ENCODE measurements at regions of chr2 and their contacts with region 1.

Region 1: GRCh38 chr2:176454893-176455811 is 185.9 kb downstream of the MTX2 start:
- DNase-seq: peak; percentile 60
- H3K4me3 Mint-ChIP-seq: no peak overlapping the region
- H3K27ac Mint-ChIP-seq: no peak overlapping the region
- H3K4me1 Mint-ChIP-seq: peaks cover 2% of the 10 kb centered on the region
- H3K27me3 Mint-ChIP-seq: peaks cover 41% of the 10 kb centered on the region

Region 2: DNA sequence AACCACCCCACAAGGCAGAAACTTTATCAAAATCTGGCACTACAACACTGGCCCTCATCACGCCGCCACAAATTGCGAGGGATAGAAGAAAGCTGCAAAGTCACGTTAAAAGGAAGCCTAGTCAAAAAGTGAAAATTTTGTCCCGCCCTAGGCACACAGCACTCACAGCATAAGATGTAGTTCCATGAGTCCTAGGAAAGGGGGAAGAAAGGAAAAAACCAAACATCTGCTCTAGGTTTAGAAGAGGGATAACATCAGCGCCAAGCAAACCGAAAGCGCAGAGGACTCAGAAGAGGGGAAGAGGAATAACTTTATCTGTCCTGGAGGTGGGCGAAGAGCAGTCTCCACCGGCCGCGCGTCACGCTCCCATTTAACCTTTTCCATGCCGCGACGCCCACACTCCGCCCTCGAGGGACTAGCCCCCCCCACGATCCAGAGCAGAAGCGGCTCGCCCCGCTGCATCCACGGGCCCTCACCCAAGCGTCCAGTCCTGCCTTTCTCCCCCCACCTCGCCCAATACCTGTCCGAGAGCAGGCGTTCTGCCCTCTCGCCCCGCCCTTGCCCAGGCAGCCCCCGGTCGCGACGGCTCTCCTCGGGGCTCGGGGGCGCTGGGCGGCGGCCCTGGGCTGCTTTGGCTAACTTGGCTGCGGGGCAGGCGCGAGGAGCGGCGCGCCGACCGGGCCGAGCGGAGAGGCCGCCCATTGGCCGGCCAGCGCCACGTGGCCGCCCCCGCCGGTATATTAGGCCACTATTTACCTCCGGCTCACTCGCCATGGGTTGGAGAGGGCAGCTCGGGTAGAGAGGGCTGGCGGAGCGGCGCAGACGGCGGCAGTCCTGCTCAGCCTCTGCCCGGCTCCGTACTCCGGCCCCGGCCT is 267.0 kb before region 1 on chr2 and contains the start of gene HOXD1:
- intact Hi-C with region 1: loop called (anchors 5 kb)
- DNase-seq: no peak
- H3K4me3 Mint-ChIP-seq: peak within 1 kb of the TSS; percentile 76
- H3K27ac Mint-ChIP-seq: no peak within 1 kb of the TSS
- H3K4me1 Mint-ChIP-seq: peaks cover 10% of the 10 kb centered on the region
- H3K27me3 Mint-ChIP-seq: peaks cover 74% of the 10 kb centered on the region
- total RNA-seq, gene HOXD1: not detected in 2 replicates

Region 3: DNA sequence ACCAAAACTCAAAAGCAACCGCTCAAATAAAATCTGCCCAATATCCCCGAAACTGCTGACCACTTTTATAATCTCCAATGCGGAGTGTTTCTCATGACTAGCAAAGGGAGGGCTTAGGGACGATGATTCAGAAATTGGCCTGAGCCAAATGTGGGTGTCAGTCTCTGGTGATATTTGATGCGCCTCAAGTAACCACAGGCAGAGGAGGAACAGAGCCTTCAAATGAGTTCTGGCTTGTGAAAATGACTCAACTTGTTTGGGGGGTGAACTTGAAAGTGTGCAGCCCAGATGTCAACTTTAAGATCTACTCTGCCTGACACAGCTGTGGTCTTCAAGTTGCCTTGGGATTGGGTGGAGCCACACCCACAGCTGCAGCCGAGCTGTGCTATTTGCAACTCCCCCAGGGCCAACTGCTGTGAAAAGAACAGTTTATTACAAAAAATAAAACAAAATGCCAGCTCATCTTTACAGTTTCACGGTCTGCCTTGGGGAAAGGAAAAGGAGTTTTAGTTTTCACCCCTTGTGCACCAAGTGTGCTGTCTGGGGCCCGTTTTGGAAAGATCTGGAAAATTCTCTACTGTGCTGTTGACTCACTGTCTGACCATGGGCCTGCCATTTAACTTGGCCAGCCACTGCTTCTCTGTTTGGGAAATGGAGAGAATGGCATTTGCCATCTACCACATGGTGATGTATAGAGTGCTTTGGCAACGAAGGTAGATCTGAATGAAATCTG is 36.2 kb after region 1 on chr2:
- intact Hi-C with region 1: no loop called
- DNase-seq: peak; percentile 13
- H3K4me3 Mint-ChIP-seq: no peak overlapping the region
- H3K27ac Mint-ChIP-seq: peak overlapping the region; percentile 18
- H3K4me1 Mint-ChIP-seq: peaks cover 18% of the 10 kb centered on the region
- H3K27me3 Mint-ChIP-seq: peaks cover 60% of the 10 kb centered on the region

Region 4: DNA sequence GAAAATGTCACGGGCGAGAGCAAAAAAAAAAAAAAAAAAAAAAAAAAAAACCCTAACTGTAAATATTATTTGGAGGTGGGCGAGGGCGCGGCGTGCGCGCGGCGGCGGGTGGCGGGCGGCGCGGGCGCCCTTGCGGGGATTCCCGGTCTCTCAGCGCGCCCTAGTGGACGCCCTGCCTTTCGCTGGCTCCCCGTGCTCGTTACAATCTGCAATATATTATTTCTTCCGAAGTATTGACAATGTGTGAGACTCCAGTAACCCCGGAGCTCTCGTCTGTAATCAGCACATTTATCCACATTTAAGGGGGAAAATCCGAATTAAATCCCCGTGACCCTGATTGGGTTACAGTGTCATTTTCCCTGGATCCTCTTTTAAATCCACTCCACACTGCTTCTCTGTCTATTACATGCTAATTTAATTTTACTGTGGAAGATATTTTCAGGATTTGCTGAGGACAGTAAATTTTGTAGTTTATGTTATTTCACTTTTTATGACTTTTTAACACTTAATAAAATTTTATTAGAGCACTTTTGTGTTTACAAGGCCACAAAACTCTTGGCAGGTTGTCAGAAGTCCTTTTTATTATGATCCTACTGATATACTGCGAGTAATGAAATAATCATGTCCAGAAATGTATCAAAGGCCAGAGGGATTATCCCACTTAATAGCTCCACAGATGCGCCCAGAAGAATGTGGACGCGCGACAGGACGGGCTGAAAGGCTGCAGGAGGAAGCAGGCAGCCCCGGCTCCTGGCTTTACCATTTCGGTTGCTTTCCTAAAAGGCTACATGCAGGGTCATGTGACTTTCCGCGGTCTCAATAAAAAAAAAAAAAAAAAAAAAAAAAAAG is 183.2 kb after region 1 on chr2:
- intact Hi-C with region 1: loop called (anchors 10 kb)
- DNase-seq: peak; percentile 29
- H3K4me3 Mint-ChIP-seq: peak overlapping the region; percentile 61
- H3K27ac Mint-ChIP-seq: no peak overlapping the region
- H3K4me1 Mint-ChIP-seq: peaks cover 5% of the 10 kb centered on the region
- H3K27me3 Mint-ChIP-seq: peaks cover 60% of the 10 kb centered on the region

Measured in activated T-helper 2 cell treated with anti-CD3 and anti-CD28 coated beads, Interferon-gamma antibody, Interleukin-2, Interleukin-4, amounts not matched to agents 10 μg/mL and 5 μg/mL and 100 μg/mL, durations not matched to agents 14 hours and 24 hours and 36 hours (primary cell).